ENCODE measurements at regions of chr17 and their contacts with region 1.

Region 1: DNA sequence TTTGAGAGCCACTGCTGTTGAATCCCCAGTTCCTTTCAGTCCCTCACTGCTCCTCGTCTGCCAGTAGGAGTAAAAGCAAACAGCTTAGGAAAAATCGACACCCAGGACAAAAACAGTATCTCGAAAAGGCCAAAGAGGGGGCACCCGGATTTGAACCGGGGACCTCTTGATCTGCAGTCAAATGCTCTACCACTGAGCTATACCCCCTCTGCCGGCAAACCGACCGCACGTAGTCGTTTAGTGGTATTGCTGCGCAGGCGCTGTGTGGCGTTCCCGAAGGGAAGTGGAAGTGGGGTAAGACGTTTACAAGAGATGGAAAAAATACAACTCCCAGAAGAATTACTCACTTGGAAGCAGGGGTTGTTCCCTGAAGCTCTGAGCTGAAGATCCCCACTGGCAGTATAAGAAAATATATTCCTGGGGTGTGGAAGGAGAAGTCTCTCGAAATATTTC is 2.2 kb upstream of the PLXDC1 start:
- DNase-seq: peak; percentile 94
- ATAC-seq: peak; percentile 43
- H3K4me3 Mint-ChIP-seq: peak overlapping the region; percentile 95
- H3K27ac Mint-ChIP-seq: peak overlapping the region; percentile 95
- H3K4me1 Mint-ChIP-seq: peaks cover 40% of the 10 kb centered on the region
- H3K27me3 Mint-ChIP-seq: peaks cover 2% of the 10 kb centered on the region

Region 2: DNA sequence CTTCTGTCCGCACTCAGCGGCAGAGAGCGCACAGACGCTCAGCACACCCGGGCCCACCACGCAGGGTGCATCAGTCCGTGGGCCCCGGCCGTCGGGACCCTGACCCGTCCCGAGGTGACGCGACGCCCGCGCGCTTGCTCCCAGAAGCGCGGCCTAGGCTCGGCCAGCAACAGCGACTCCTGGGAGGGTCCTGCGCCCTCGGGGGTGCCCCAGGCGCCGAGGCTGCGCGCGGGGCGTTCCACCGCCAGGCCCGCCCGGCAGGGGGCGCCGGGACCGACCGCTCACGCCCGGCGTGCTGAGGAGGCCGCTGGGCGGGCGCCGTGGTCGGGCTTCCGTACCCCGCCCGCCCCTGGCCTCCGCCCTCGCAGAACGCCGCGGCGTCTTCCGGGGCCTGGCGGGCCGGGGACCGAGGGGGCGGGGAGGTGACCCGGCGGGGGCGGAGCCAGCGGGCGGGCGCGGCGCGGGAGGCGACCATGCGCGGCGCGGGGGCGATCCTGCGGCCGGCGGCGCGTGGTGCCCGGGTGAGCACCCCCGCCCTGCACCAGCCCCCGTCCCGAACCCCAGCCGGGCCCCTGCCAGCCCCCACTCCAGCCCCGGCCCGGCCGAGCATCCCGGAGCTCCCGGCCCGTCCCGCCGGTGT is 423.6 kb before region 1 on chr17 and contains the start of gene CISD3:
- CTCF ChIA-PET with region 1: interaction called, 4 read pairs
- POLR2A ChIA-PET with region 1: no interaction called
- intact Hi-C with region 1: loop called in 1 of 2 experiments (anchors 1 kb)
- DNase-seq: peak; percentile 92
- ATAC-seq: peak; percentile 66
- H3K4me3 Mint-ChIP-seq: peak within 1 kb of the TSS; percentile 91
- H3K27ac Mint-ChIP-seq: peak within 1 kb of the TSS; percentile 100
- H3K4me1 Mint-ChIP-seq: peaks cover 81% of the 10 kb centered on the region
- H3K27me3 Mint-ChIP-seq: no peaks in the 10 kb centered on the region
- total RNA-seq, gene CISD3: 49.4 to 58.6 TPM

Region 3: DNA sequence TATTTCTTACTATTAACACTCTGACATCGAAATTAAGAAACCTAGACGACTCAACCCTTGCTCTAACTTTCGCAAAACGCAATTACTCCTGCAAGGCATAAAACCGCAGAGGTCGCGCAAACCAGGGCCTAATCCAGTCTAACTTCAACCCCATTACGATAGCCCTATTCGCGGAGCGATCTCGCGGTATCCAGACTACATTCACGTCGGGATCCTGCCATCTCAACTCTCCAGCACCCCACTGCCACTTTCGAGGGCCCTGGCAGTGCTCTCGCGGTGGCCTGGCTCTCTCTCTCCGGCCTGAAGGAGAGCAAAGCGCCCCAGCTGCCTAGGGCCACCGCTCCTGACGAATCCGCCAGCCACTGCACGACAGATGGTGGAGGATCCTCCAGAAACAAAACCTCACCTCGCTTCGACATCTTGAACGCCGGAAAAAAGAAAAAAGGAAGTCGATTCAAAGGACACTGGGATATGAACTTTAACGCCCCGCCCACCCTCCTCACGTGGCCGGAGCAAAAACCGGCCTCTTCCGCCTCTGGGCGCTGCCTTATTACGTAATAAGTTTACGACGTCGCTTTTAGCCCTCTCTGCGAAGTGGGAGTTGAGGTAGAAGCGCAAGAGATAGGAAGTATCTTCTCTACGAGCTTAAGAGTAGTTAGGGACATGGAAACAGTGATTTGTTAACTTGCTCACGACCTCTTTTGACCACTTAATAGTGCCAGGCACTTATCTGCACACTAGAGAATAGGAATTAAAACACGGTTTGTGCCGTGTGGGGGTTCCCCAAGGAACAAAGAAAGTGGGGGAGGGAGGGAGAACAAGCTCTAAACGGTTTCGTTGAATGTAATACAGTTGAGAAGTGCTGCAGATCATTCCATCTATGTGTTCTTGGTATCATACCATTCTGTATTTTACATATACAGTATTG is 300.1 kb before region 1 on chr17 and contains the start of gene RPL23:
- CTCF ChIA-PET with region 1: interaction called, 8 read pairs
- POLR2A ChIA-PET with region 1: no interaction called
- intact Hi-C with region 1: loop called in 1 of 2 experiments (anchors 1 kb)
- DNase-seq: peak; percentile 96
- ATAC-seq: peak; percentile 87
- H3K4me3 Mint-ChIP-seq: peak within 1 kb of the TSS; percentile 99
- H3K27ac Mint-ChIP-seq: peak within 1 kb of the TSS; percentile 99
- H3K4me1 Mint-ChIP-seq: peaks cover 46% of the 10 kb centered on the region
- H3K27me3 Mint-ChIP-seq: no peaks in the 10 kb centered on the region
- total RNA-seq, gene RPL23: 1,886 to 1,896 TPM

Region 4: GRCh38 chr17:39057701-39058206 is 95.9 kb before region 1 on chr17:
- CTCF ChIA-PET with region 1: interaction called, 9 read pairs
- POLR2A ChIA-PET with region 1: no interaction called
- intact Hi-C with region 1: loop called in 1 of 2 experiments (anchors 1 kb)
- DNase-seq: no peak
- ATAC-seq: no peak
- H3K4me3 Mint-ChIP-seq: peak overlapping the region; percentile 67
- H3K27ac Mint-ChIP-seq: no peak overlapping the region
- H3K4me1 Mint-ChIP-seq: peaks cover 15% of the 10 kb centered on the region
- H3K27me3 Mint-ChIP-seq: no peaks in the 10 kb centered on the region

Region 5: DNA sequence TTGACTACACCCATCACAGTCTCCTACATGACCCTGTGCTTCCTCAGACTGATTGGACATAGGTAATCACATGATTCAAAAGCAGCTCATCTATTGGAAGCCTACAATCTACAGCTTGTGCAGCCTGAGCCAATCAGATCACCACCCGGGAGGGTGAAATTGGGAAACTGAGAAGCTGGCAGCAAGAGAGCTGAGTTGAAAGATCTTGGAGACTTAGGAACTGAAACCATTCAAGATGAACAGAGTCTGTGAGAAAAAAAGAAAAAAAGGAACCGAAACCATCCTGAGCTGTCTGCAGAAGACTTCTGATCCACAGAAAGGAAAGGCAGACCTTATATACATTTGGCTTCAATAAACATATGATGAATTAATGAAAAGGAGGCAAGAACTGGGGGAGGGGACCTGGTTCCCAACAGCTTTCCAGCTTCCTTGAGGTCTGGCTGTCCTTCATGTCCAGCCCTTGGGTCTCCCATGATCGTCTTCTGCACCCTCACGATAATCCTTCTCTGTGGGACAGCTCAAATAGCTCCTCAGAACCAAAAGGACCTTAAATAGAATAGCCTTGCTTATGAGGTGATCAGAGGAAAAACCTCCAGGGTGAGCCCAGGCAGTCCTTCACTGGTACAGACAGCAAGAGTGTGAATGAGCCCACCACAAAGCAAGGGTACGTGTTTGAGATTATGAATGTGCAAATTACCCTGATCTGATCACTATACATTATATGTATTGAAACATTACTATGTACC is 34.8 kb before region 1 on chr17:
- CTCF ChIA-PET with region 1: no interaction called
- POLR2A ChIA-PET with region 1: no interaction called
- intact Hi-C with region 1: no loop called
- DNase-seq: no peak
- ATAC-seq: no peak
- H3K4me3 Mint-ChIP-seq: no peak overlapping the region
- H3K27ac Mint-ChIP-seq: no peak overlapping the region
- H3K4me1 Mint-ChIP-seq: peaks cover 4% of the 10 kb centered on the region
- H3K27me3 Mint-ChIP-seq: no peaks in the 10 kb centered on the region

Region 6: DNA sequence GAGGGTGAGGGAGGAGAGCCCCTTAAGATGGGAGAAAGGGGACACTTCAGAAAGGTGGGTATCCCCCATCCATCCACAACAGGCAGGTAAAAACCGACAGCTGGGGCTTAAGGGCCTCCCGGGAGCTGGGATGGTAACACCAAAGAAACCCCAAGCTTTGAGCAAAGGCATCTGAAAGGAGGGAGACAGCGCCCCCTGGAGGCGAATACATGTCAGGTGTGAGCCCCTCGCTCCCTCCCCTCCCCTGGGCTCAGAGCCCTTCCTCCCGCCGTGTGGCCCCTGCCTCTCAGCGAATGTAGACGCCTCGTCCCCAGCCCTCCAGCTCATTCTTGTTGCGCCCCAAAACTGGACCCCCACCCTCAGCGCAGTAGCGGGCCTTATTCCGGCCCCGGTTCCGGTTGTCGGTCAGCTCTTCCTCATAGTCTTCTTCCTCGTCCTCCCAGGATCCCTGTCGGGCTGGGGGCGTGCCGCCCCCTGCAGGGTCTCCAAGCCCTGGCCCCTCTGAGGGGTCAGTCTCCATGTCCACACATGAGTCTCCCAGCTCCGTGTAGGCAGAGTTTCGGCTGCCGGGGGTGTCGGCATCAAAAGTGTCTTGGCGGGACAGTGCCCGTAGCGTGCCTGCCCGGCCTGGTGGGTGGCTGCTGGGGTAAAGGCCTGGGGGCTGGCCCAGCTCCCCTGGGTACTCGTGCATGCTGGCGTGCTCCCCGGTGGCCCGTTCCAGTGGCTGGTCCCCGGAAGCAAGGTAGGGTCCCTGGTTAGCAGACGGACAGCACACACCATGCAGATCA is 21.5 kb after region 1 on chr17:
- CTCF ChIA-PET with region 1: interaction called, 10 read pairs
- POLR2A ChIA-PET with region 1: interaction called, 4 read pairs
- intact Hi-C with region 1: no loop called
- DNase-seq: peak; percentile 87
- ATAC-seq: peak; percentile 88
- H3K4me3 Mint-ChIP-seq: no peak overlapping the region
- H3K27ac Mint-ChIP-seq: no peak overlapping the region
- H3K4me1 Mint-ChIP-seq: peaks cover 9% of the 10 kb centered on the region
- H3K27me3 Mint-ChIP-seq: no peaks in the 10 kb centered on the region

Region 7: GRCh38 chr17:39213852-39214251 is 60.2 kb after region 1 on chr17:
- CTCF ChIA-PET with region 1: no interaction called
- POLR2A ChIA-PET with region 1: no interaction called
- intact Hi-C with region 1: no loop called
- DNase-seq: no peak
- ATAC-seq: no peak
- H3K4me3 Mint-ChIP-seq: no peak overlapping the region
- H3K27ac Mint-ChIP-seq: no peak overlapping the region
- H3K4me1 Mint-ChIP-seq: peaks cover 12% of the 10 kb centered on the region
- H3K27me3 Mint-ChIP-seq: peaks cover 11% of the 10 kb centered on the region

Region 8: GRCh38 chr17:39461113-39461925 is 307.7 kb after region 1 on chr17 and contains the start of gene CDK12:
- CTCF ChIA-PET with region 1: no interaction called
- POLR2A ChIA-PET with region 1: no interaction called
- intact Hi-C with region 1: loop called in 1 of 2 experiments (anchors 1 kb)
- DNase-seq: peak; percentile 97
- ATAC-seq: peak; percentile 91
- H3K4me3 Mint-ChIP-seq: peak within 1 kb of the TSS; percentile 91
- H3K27ac Mint-ChIP-seq: peak within 1 kb of the TSS; percentile 94
- H3K4me1 Mint-ChIP-seq: peaks cover 22% of the 10 kb centered on the region
- H3K27me3 Mint-ChIP-seq: no peaks in the 10 kb centered on the region
- total RNA-seq, gene CDK12: 65.9 to 83.3 TPM